ENCODE measurements at regions of chr2 and their contacts with region 1.

Region 1: GRCh38 chr2:65264821-65265670 is 37.4 kb downstream of the ACTR2 start:
- DNase-seq: peak; percentile 79 to 85 (median 80)
- H3K4me3 ChIP-seq: no peak overlapping the region
- H3K27ac ChIP-seq: no peak overlapping the region
- H3K4me1 ChIP-seq: no peaks in the 10 kb centered on the region
- H3K27me3 ChIP-seq: no peaks in the 10 kb centered on the region

Region 2: DNA sequence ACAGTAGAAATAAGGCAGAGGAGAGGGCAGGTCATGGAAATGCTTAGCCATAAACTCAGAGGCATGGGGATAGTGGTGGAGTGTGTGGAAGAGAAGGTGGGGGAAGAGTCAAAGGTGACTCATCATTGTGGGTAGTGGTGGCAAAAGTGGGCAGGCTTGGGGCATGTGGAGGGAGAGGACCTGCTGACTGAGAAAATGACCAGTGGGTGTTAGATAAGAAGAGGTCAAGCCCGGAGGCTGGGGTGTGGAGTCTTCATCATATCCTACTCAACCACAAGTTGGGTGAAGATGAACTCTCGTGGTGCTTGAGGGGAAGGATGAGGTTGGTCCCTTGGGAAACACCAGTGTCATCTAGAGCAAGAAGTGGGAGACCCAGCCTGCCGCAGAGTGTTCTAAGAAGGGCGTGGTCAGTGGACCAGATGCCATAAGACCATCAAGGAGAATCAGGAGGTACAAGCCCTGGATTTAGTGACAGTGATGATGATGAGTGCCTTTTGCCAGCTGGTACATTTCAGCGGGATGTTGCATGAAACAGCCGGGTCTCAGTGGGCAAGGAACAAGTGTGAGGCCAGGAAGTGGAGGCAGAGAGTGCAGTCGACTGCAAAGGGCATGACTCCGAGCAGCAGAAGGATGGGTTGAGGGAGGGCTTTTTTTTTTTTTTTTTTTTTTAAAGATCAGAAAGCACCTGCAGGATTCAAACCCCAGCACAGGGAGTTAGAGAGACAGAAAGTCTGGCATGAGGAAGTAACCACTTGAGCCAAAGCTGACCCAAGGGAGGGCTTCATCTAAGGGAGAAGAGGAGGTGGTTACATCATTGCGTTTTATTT is 289.9 kb after region 1 on chr2:
- CTCF ChIA-PET with region 1: interaction called, 15 read pairs
- POLR2A ChIA-PET with region 1: no interaction called
- DNase-seq: peak in 1 of 3 donors; percentile 24
- H3K4me3 ChIP-seq: no peak overlapping the region
- H3K27ac ChIP-seq: no peak overlapping the region
- H3K4me1 ChIP-seq: no peaks in the 10 kb centered on the region
- H3K27me3 ChIP-seq: no peaks in the 10 kb centered on the region

Region 3: DNA sequence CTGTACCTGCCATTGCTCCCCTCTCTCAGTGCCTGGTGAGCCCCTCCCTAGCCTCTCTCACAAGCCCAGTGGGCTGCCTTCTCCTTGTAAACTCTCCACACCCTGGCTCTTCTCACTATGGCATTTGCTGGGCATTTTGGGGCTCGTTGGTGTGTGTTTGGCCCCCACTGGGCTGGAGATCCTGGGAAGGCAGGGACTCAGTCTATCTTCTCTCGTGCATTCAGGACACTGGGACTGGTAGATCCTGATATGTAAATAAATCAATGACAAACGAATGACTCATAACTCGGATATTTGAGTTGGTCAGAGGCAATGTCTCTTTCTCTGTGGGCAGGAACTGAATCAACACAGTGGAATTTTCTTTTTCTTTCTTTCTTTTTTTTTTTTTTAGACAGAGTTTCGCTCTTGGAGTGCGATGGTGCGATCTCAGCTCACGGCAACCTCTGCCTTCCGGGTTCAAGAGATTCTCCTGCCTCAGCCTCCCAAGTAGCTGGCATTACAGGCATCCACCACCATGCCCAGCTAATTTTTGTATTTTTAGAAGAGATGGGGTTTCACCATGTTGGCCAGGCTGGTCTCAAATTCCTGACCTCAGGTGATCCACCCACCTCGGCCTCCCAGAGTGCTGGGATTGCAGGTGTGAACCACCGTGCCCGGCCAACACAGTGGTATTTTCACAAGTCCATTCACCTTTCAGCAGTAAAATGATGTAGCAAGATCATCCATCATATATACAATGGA is 312.0 kb after region 1 on chr2:
- CTCF ChIA-PET with region 1: interaction called, 11 read pairs
- POLR2A ChIA-PET with region 1: no interaction called
- DNase-seq: no peak
- H3K4me3 ChIP-seq: no peak overlapping the region
- H3K27ac ChIP-seq: no peak overlapping the region
- H3K4me1 ChIP-seq: peaks cover 0 to 11% (median 8%) of the 10 kb centered on the region in 4 experiments
- H3K27me3 ChIP-seq: no peaks in the 10 kb centered on the region

Region 4: GRCh38 chr2:65595641-65596040 is 330.6 kb after region 1 on chr2:
- CTCF ChIA-PET with region 1: no interaction called
- POLR2A ChIA-PET with region 1: no interaction called
- DNase-seq: no peak
- H3K4me3 ChIP-seq: no peak overlapping the region
- H3K27ac ChIP-seq: no peak overlapping the region
- H3K4me1 ChIP-seq: no peaks in the 10 kb centered on the region
- H3K27me3 ChIP-seq: no peaks in the 10 kb centered on the region